Heart right ventricle (tissue), 16 donors: ENCODE measurements at regions of chr4 and their contacts with region 1.

Region 1: DNA sequence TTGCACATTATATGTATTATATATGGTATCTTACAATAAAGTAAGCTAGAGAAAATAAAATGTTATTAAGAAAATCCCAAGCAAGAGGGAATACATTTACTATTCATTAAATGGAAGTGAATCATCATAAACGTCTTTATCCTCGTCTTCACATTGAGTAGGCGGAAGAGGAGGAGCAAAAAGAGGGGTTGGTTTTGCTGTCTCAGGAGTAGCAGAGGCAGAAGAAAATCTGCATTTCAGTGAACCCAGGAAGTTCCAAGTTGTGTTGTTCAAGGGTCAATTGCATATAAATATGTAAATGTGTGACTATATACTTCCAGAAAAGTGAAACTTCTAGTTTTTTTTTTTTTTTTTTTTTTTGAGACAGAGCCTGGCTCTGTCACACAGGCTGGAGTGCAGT is 301.4 kb downstream of the TMA16 start:
- DNase-seq: no peak
- ATAC-seq: no peak
- H3K4me3 ChIP-seq: no peak overlapping the region
- H3K27ac ChIP-seq: no peak overlapping the region
- H3K4me1 ChIP-seq: no peaks in the 10 kb centered on the region
- H3K27me3 ChIP-seq: no peaks in the 10 kb centered on the region
- CTCF ChIP-seq: no peak

Region 2: GRCh38 chr4:163003979-163004378 is 791.9 kb before region 1 on chr4:
- intact Hi-C with region 1: loop called in 1 of 10 experiments (anchors 10 kb)
- DNase-seq: no peak
- ATAC-seq: no peak
- H3K4me3 ChIP-seq: no peak overlapping the region
- H3K27ac ChIP-seq: no peak overlapping the region
- H3K4me1 ChIP-seq: no peaks in the 10 kb centered on the region
- H3K27me3 ChIP-seq: no peaks in the 10 kb centered on the region
- CTCF ChIP-seq: no peak

Region 3: DNA sequence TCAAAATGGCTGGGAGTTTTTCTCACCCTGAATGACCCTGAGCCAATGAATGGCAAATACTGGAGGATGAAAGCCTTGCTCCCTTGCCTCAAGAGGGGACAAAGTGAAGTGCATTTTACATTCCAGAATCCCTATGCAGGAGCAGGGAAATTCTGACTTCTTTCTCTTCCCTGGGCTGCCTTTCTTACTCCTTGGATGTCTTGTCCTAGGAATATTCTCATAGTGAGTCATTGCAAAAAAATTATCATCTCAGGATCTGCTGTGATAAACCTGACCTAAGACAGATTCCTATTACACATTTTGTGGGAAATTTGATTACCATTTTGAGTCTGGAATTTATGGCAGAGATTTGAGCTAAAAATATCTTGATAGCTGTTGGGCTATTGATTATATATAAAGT is 101.5 kb before region 1 on chr4:
- intact Hi-C with region 1: no loop called
- DNase-seq: no peak
- ATAC-seq: no peak
- H3K4me3 ChIP-seq: no peak overlapping the region
- H3K27ac ChIP-seq: no peak overlapping the region
- H3K4me1 ChIP-seq: no peaks in the 10 kb centered on the region
- H3K27me3 ChIP-seq: peaks cover 0 to 5% (median 0%) of the 10 kb centered on the region in 7 donors
- CTCF ChIP-seq: no peak

Region 4: DNA sequence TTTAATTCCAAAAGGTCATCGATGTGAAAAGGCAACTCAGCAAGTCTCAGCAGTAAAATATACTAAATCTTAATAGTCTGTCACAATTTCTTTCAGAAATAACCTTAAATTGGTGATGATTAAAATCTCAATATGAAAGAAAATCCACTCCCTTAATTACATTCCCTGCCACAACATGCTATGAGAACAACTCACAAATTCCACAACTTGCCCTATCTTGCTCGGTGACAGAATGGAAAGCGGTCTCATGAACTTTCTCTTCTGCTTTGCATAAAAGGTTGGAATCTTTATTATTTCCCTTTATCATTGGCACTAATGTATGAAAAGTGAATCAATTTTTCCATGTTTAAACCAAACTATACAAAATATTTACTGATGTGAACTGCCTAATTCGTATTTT is 79.4 kb after region 1 on chr4:
- intact Hi-C with region 1: no loop called
- DNase-seq: no peak
- ATAC-seq: no peak
- H3K4me3 ChIP-seq: no peak overlapping the region
- H3K27ac ChIP-seq: no peak overlapping the region
- H3K4me1 ChIP-seq: no peaks in the 10 kb centered on the region
- H3K27me3 ChIP-seq: no peaks in the 10 kb centered on the region
- CTCF ChIP-seq: no peak